Activated T-helper 1 cell treated with anti-CD3 and anti-CD28 coated beads, Interleukin-12 subunit alpha, Interleukin-12 subunit beta, Interleukin-2, Interleukin-4 antibody, amounts not matched to agents 30 ng/mL and 10 ng/mL and 1 ng/mL, durations not matched to agents 14 hours and 24 hours and 36 hours (primary cell): ENCODE measurements at regions of chr5 and their contacts with region 1.

Region 1: GRCh38 chr5:62284946-62285891 is 20.8 kb upstream of the KIF2A start:
- DNase-seq: peak; percentile 69
- H3K4me3 Mint-ChIP-seq: peak overlapping the region; percentile 51
- H3K27ac Mint-ChIP-seq: peak overlapping the region; percentile 95
- H3K4me1 Mint-ChIP-seq: peaks cover 83% of the 10 kb centered on the region
- H3K27me3 Mint-ChIP-seq: peaks cover 1% of the 10 kb centered on the region

Region 2: DNA sequence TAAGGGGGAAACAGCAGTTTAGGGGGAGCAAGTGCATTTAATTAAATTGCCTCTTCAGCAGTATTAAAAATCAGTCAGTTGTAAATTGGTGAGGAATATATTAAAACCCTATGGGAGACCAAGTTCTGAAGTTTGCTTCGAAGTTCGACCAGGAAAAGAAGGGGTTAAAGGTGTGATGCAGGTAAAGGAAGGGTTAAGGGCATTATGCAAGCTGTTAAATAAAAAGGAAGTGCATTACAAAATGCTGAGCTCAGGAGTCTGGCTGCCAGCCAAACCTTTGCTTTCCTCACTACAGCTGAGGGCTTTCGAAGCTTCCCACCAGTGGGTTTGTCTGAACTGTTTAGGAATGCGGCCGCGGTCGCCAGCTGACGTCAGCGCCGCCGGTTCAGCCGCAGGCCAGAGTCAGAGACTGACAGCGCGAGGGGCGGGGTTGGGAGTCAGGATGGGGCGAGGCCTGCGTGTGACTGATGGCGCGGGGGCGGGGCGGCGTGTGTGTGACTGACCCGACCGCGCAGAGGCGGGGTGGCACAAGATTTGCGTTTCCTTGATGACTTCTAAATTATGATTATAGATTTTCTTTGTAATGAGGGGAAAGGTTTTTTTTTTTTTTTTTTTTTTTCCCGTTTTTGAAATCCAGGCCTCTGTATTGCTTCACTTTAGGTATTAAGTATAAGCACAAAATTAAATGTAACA is 876.6 kb before region 1 on chr5:
- intact Hi-C with region 1: loop called (anchors 1 kb)
- DNase-seq: peak; percentile 90
- H3K4me3 Mint-ChIP-seq: peak overlapping the region; percentile 59
- H3K27ac Mint-ChIP-seq: peak overlapping the region; percentile 56
- H3K4me1 Mint-ChIP-seq: peaks cover 23% of the 10 kb centered on the region
- H3K27me3 Mint-ChIP-seq: peaks cover 7% of the 10 kb centered on the region

Region 3: DNA sequence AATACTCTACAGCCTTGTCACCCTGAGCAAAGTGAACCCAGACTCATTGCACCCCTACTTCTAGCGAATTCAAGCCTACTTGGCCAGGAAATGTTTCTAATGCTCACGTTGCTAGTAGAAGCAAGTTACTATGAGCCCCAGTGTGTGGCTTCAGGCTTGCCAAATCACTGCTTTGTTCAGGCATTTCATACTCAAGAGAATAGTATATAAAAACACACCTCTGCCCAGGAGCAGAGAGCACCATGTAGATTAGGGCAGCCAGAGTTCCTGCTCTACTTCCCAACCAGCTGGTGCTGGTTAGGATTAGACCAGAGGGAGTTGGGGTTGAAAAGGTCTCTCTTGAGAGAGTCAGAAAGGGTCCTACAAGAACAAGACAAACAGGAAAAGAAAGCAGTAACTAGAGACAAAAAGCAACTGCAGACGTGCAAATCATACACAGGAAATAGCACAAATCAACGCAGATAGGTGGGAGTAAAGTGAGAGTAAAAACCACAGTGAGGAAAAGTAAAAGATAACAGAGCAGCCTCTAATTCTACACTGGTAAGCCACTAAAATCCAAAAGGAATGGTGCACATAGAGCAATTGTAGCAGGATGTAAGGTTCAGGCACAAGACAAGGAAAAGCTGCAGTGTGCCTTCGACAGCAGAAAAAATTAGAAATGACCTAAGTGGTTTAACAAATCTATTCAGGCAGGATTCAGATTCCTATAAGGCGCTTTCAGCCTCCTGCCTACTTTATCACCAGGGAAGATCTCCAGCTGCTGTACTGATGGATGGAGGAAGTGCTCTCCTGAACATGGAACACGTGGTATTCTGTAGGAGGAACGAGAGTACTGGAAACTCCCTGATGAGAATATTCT is 28.8 kb before region 1 on chr5:
- intact Hi-C with region 1: loop called (anchors 1 kb)
- DNase-seq: peak; percentile 18
- H3K4me3 Mint-ChIP-seq: peak overlapping the region; percentile 21
- H3K27ac Mint-ChIP-seq: peak overlapping the region; percentile 88
- H3K4me1 Mint-ChIP-seq: peaks cover 48% of the 10 kb centered on the region
- H3K27me3 Mint-ChIP-seq: no peaks in the 10 kb centered on the region

Region 4: DNA sequence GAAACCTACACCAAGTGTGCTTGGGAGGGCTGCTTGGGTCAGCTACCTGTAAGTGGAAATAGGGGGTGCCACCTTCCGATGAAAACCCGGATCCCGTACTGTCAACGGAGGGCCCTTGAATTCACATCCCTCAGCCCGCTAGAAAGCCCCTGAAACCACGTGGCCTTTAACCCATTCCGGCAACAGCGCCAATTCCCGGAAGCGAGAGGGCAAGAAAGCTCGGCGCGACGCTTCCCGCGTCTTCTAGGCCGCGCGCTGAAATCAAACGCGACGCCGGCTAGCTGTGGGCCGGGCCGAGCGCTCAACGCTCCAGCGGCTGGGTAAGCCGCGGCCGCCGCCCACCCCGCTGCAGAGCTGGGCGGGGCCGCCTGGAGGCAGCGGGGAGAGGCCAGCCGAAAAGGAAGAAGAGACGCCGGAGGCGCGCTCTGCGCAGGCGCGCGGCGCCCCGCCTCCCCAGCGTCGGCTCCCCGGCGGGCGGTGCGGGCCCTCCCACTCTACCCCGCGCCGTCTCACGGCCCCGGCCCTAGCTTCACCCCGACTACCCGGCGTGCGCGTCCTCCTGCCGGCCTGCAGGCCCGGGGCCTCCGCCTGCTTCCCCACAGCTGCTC is 20.6 kb after region 1 on chr5 and contains the start of gene KIF2A:
- intact Hi-C with region 1: loop called (anchors 1 kb)
- DNase-seq: peak; percentile 95
- H3K4me3 Mint-ChIP-seq: peak within 1 kb of the TSS; percentile 99
- H3K27ac Mint-ChIP-seq: peak within 1 kb of the TSS; percentile 99
- H3K4me1 Mint-ChIP-seq: peaks cover 57% of the 10 kb centered on the region
- H3K27me3 Mint-ChIP-seq: no peaks in the 10 kb centered on the region
- total RNA-seq, gene KIF2A: 235 and 240 TPM in 2 replicates

Region 5: GRCh38 chr5:62412537-62413329 is 127.5 kb after region 1 on chr5 and contains the start of gene IPO11:
- intact Hi-C with region 1: loop called (anchors 1 kb)
- DNase-seq: peak; percentile 99
- H3K4me3 Mint-ChIP-seq: peak within 1 kb of the TSS; percentile 94
- H3K27ac Mint-ChIP-seq: peak within 1 kb of the TSS; percentile 90
- H3K4me1 Mint-ChIP-seq: peaks cover 21% of the 10 kb centered on the region
- H3K27me3 Mint-ChIP-seq: peaks cover 7% of the 10 kb centered on the region
- total RNA-seq, gene IPO11: 52.5 and 54.2 TPM in 2 replicates